ENCODE measurements at regions of chr14 and their contacts with region 1.

Region 1: DNA sequence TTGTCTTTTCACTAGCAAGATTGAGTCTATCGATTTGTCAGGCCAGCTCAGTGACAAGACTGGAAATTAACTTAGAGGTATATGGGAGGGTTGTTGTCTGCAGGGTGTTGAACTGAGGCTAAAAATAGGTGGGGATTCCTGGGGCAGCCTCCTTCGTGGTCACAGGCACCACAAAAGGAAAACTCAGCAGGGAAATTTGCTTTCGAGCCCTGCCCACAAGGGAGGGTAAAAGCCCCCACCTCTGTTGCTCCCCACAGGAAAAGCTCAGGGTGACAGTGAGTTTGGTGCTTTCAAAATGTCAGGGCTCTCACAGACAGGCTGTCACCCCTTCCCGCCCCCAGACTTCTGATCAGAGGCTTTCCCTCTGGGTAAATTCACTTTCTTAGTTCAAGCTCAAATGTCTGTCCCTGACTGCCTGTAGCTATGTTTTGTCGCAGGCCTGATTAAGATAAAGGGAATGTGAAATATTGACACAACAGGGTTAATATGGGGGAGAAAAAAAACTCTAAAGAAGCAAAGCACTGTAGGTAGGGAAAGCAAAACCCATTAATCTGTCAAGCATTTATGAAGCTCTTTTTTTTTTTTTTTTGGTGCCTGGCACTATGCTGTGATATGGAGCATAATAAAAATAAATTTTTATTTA is 11.7 kb upstream of the NFKBIA start:
- DNase-seq: peak; percentile 34
- H3K4me3 ChIP-seq: no peak overlapping the region
- H3K27ac ChIP-seq: peak overlapping the region in 1 of 4 donors; percentile 28
- H3K4me1 ChIP-seq: peaks cover 0 to 17% (median 4%) of the 10 kb centered on the region in 4 donors
- H3K27me3 ChIP-seq: no peaks in the 10 kb centered on the region
- CTCF ChIP-seq: no peak
- EP300 ChIP-seq: no peak
- POLR2A ChIP-seq: no peak

Region 2: GRCh38 chr14:34875031-34875922 is 541.0 kb before region 1 on chr14 and contains the start of gene BAZ1A:
- in situ Hi-C with region 1: loop called in 1 of 4 experiments (anchors 10 kb)
- intact Hi-C with region 1: no loop called
- DNase-seq: peak; percentile 76
- H3K4me3 ChIP-seq: peak within 1 kb of the TSS; percentile 70 to 99 (median 88)
- H3K27ac ChIP-seq: peak within 1 kb of the TSS; percentile 99 to 100 (median 99)
- H3K4me1 ChIP-seq: peaks cover 0 to 25% (median 13%) of the 10 kb centered on the region in 4 donors
- H3K27me3 ChIP-seq: no peaks in the 10 kb centered on the region
- CTCF ChIP-seq: peak; percentile 12 to 42 (median 28)
- EP300 ChIP-seq: no peak
- POLR2A ChIP-seq: peak; percentile 92
- total RNA-seq, gene BAZ1A: 25.8 to 48.1 (median 41.0) TPM

Region 3: DNA sequence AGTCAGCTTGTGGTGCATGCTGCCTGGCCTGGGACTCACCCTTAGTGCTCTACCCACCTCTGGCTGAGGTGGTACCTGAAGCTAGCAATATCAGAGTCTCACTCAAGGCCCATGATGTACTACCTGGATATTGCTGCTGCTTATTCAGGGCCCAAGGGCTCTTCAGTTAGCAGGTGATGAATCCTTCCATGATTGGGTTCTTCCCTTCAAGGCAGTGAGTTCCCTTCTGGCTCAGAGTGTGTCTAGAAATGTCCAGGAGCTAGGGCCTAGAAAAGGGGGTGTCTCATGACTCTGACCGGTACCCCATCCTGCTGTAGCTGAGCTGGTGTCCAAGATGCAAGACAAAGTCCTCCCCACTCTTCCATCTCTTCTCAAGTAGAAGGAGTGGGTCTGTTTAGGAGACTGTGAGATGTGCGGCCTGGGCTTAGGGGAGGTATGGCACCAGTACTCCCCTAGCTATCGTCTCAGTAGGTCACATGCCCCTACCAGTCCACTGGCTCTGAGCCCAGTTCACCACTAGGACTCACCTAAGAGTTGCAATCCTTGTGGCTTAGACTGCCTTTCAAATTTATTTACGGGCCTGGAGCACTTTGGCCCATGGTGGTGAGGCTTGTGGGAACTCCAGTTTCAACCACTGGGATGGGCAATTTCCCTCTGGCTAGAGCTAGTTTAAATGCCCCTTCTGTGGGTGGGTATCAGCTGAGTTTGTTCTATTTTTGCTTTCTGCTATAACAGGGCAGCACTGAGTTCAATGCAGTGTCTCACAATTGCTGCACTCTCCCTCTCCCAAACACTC is 281.7 kb before region 1 on chr14:
- in situ Hi-C with region 1: loop called in 2 of 4 experiments (anchors 5 kb)
- intact Hi-C with region 1: loop called (anchors 5 kb)
- DNase-seq: no peak
- H3K4me3 ChIP-seq: no peak overlapping the region
- H3K27ac ChIP-seq: no peak overlapping the region
- H3K4me1 ChIP-seq: no peaks in the 10 kb centered on the region
- H3K27me3 ChIP-seq: no peaks in the 10 kb centered on the region
- CTCF ChIP-seq: no peak
- EP300 ChIP-seq: no peak
- POLR2A ChIP-seq: no peak

Region 4: GRCh38 chr14:35140718-35141581 is 275.3 kb before region 1 on chr14:
- in situ Hi-C with region 1: loop called in 3 of 4 experiments (anchors 5 kb)
- intact Hi-C with region 1: no loop called
- DNase-seq: no peak
- H3K4me3 ChIP-seq: no peak overlapping the region
- H3K27ac ChIP-seq: no peak overlapping the region
- H3K4me1 ChIP-seq: no peaks in the 10 kb centered on the region
- H3K27me3 ChIP-seq: no peaks in the 10 kb centered on the region
- CTCF ChIP-seq: peak; percentile 34 to 63 (median 44)
- EP300 ChIP-seq: no peak
- POLR2A ChIP-seq: no peak

Region 5: DNA sequence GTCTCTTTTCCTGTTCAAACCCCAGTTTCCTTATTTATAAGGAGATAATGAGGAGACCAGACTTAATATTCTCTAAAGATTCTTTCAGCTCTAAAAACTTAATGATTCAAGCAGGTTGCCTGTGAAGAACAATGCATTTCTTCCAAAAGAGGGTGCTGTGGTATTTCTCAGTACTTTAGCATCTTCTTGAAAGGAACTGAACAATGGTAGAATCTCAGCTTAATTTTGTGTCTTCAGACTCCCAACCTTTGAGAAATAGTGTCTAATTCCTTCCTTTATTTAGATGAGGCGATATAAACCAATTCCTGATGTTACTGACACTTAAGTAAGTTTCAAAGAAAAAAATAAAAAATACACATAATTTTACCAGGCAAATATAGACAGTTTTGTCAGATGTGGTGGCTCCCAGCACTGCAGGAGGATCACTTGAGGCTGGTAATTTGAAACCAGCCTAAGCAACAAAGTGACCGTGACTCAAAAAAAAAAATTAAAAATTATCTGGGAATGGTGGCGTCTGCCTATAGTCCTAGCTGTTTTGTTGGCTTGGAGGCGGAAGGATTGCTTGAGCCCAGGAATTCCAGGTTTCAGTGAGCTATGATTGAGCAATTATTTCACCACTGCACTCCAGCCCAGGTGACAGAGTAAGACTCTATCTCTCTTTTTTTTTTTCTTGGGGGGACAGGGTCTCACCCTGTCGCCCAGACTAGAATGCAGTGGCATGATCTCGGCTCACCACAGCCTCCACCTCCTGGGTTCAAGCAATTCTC is 200.9 kb before region 1 on chr14:
- in situ Hi-C with region 1: loop called in 2 of 4 experiments (anchors 5 kb)
- intact Hi-C with region 1: no loop called
- DNase-seq: no peak
- H3K4me3 ChIP-seq: no peak overlapping the region
- H3K27ac ChIP-seq: no peak overlapping the region
- H3K4me1 ChIP-seq: no peaks in the 10 kb centered on the region
- H3K27me3 ChIP-seq: no peaks in the 10 kb centered on the region
- CTCF ChIP-seq: peak; percentile 23 to 46 (median 42)
- EP300 ChIP-seq: no peak
- POLR2A ChIP-seq: no peak

Region 6: DNA sequence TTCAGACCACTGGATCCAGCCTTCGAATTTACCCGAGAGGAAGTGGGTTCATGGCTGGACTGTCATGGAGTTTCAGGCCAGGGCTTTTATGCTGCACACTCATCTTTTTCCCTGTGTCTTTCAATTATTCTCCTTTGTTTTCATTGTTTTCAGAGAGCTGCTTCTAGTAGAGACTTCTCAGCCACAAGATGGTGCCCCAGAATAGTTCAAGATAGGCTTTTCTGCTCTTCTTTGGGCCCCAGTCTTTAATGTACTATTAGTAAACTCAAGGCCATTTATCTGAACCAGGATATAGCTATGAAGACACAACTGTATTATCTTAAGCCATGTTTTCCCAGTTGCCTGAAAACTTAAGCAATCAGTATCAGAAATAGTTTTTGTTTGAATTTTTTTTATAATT is 154.5 kb before region 1 on chr14:
- in situ Hi-C with region 1: no loop called
- intact Hi-C with region 1: loop called (anchors 10 kb)
- DNase-seq: no peak
- H3K4me3 ChIP-seq: no peak overlapping the region
- H3K27ac ChIP-seq: no peak overlapping the region
- H3K4me1 ChIP-seq: no peaks in the 10 kb centered on the region
- H3K27me3 ChIP-seq: no peaks in the 10 kb centered on the region
- CTCF ChIP-seq: peak in 2 of 5 experiments; percentile 13 to 17
- EP300 ChIP-seq: no peak
- POLR2A ChIP-seq: no peak

Region 7: DNA sequence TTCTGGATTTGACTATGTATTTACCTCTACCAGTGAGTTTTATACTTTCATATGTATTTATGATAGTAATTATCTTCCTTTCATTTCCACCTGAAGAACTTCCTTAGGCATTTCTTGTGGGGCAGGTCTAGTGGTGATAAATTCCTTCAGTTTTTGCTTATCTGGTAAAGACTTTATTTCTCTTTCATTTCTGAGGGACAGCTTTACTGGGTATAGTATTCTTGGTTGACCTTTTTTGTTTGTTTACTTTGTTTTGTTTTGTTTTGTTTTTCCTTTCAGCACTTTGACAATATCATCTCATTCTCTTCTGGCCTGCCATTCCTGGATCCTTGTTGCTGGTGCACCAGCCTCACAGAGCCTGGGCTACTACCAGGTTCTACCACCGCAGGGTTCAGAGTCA is 42.2 kb after region 1 on chr14:
- in situ Hi-C with region 1: no loop called
- intact Hi-C with region 1: no loop called
- DNase-seq: no peak
- H3K4me3 ChIP-seq: no peak overlapping the region
- H3K27ac ChIP-seq: no peak overlapping the region
- H3K4me1 ChIP-seq: no peaks in the 10 kb centered on the region
- H3K27me3 ChIP-seq: no peaks in the 10 kb centered on the region
- CTCF ChIP-seq: no peak
- EP300 ChIP-seq: no peak
- POLR2A ChIP-seq: no peak